ENCODE measurements at regions of chr3 and their contacts with region 1.

Region 1: GRCh38 chr3:110894574-110894973 is 177.0 kb upstream of the NECTIN3 start:
- DNase-seq: no peak
- ATAC-seq: no peak
- H3K4me3 ChIP-seq: no peak overlapping the region
- H3K4me3 Mint-ChIP-seq: no peak overlapping the region
- H3K27ac ChIP-seq: no peak overlapping the region
- H3K27ac Mint-ChIP-seq: no peak overlapping the region
- H3K4me1 ChIP-seq: no peaks in the 10 kb centered on the region
- H3K4me1 Mint-ChIP-seq: no peaks in the 10 kb centered on the region
- H3K27me3 ChIP-seq: no peaks in the 10 kb centered on the region
- H3K27me3 Mint-ChIP-seq: peaks cover 0 to 14% of the 10 kb centered on the region in 2 donors

Region 2: GRCh38 chr3:109597444-109597843 is 1297.1 kb before region 1 on chr3:
- CTCF ChIA-PET with region 1: no interaction called
- POLR2A ChIA-PET with region 1: interaction called in 1 of 2 experiments, 12 read pairs
- DNase-seq: no peak
- ATAC-seq: no peak
- H3K4me3 ChIP-seq: no peak overlapping the region
- H3K4me3 Mint-ChIP-seq: no peak overlapping the region
- H3K27ac ChIP-seq: no peak overlapping the region
- H3K27ac Mint-ChIP-seq: no peak overlapping the region
- H3K4me1 ChIP-seq: no peaks in the 10 kb centered on the region
- H3K4me1 Mint-ChIP-seq: no peaks in the 10 kb centered on the region
- H3K27me3 ChIP-seq: no peaks in the 10 kb centered on the region
- H3K27me3 Mint-ChIP-seq: no peaks in the 10 kb centered on the region

Measured in T-cell (primary cell).